ENCODE measurements at regions of chr1 and their contacts with region 1.

Region 1: GRCh38 chr1:6239950-6240768 is 3.8 kb upstream of the HES3 start:
- DNase-seq: no peak

Region 2: DNA sequence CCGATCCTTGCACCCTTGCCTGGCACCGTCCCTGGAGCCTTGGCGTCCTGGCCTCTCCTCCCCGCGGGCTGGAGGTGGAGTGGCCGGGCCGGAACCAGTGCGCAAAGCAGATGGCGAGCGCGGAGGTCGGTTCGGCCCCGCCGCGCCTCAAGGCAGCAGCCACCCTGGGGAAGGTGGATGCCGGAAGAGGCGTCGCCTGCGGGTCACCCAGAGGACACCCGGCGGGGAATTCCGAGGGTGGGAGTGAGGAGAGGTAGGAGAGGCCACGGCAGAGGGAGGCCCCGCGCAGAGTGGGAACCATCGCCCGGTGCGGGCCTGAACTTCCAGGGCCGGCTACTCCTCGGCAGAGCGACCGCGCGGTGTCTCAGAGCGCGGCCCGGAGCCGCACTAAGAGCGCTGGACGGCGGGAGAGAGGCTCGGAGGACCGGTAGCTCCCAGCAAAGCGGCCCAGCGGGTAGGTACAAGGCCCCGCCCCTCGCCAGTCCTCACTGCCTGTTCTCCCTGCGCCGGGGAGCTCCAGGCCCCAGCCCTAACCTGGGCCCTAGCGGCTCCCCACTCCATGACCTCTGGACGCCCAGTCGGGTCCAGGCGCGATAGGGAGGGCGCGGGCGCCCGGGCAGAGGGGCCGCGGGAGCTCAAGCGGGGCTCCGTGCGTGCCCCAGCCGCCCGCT is 34.2 kb before region 1 on chr1 and contains the start of gene RNF207:
- intact Hi-C with region 1: loop called in 1 of 2 experiments (anchors 5 kb)
- DNase-seq: peak; percentile 86
- total RNA-seq, gene RNF207: 8.6 to 8.7 TPM